ENCODE measurements at regions of chr1 and their contacts with region 1.

Region 1: GRCh38 chr1:115807723-115808122 is 33.2 kb downstream of the NHLH2 start:
- DNase-seq: peak in 1 of 3 donors; percentile 59
- ATAC-seq: peak; percentile 84 to 89 (median 85)
- H3K4me3 ChIP-seq: no peak overlapping the region
- H3K27ac ChIP-seq: no peak overlapping the region
- H3K4me1 ChIP-seq: no peaks in the 10 kb centered on the region
- H3K27me3 ChIP-seq: no peaks in the 10 kb centered on the region
- CTCF ChIP-seq: peak; percentile 65 to 80 (median 74)
- POLR2A ChIP-seq: no peak

Region 2: GRCh38 chr1:115862403-115862802 is 54.7 kb after region 1 on chr1:
- intact Hi-C with region 1: no loop called
- DNase-seq: no peak
- ATAC-seq: no peak
- H3K4me3 ChIP-seq: no peak overlapping the region
- H3K27ac ChIP-seq: no peak overlapping the region
- H3K4me1 ChIP-seq: no peaks in the 10 kb centered on the region
- H3K27me3 ChIP-seq: no peaks in the 10 kb centered on the region
- CTCF ChIP-seq: no peak
- POLR2A ChIP-seq: no peak

Region 3: GRCh38 chr1:115980998-115981993 is 173.6 kb after region 1 on chr1:
- intact Hi-C with region 1: loop called (anchors 5 to 10 kb)
- DNase-seq: no peak
- ATAC-seq: peak; percentile 48 to 67 (median 63)
- H3K4me3 ChIP-seq: no peak overlapping the region
- H3K27ac ChIP-seq: no peak overlapping the region
- H3K4me1 ChIP-seq: peaks cover 0 to 20% (median 0%) of the 10 kb centered on the region in 4 donors
- H3K27me3 ChIP-seq: no peaks in the 10 kb centered on the region
- CTCF ChIP-seq: peak; percentile 55 to 67 (median 58)
- POLR2A ChIP-seq: no peak